Heart right ventricle (tissue), 16 donors: ENCODE measurements at regions of chr13 and their contacts with region 1.

Region 1: DNA sequence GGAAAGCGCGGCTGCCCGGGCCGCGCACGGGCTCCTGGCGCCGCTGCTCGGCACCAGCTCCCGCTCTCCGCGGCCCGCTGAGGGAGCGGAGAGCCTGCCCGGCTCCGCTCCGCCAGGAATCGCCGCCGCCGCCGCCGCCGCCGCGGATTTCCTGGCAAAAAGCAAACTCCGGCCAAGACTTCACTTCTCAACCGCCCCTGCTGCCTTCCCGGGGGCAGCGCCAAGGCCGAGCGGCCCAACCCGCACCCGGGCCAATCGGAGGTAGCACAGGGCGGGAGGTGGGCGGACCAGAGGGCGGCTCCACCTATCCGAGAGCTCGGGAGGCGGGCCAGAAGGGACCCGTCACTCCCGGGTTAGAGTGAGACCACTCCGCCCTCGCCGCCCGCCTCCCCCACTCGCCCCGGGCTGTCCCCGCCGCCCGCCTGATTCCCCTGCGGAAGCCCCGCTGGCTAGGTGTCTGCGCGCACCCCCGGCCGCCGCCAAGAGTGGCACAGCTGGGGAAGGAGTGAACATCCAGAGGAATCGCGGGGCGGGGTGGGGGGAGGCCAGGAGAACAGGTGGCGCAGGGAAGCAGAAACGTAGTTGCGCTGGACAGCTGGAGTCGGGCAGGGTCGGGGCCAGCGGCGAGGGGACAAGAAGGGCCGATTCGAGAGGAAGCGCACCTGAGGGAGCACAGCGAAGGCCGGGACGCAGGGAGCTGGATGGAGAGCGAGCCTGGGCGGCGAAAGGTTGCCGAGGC is at the start of gene LNX2:
- DNase-seq: peak; percentile 98 to 99
- ATAC-seq: peak; percentile 97 to 99 (median 98)
- H3K4me3 ChIP-seq: peak within 1 kb of the TSS; percentile 58 to 100 (median 92)
- H3K27ac ChIP-seq: peak within 1 kb of the TSS; percentile 90 to 99 (median 96)
- H3K4me1 ChIP-seq: peaks cover 4 to 49% (median 31%) of the 10 kb centered on the region in 9 donors
- H3K27me3 ChIP-seq: no peaks in the 10 kb centered on the region
- CTCF ChIP-seq: no peak
- total RNA-seq, gene LNX2: 10.2 to 22.3 (median 15.4) TPM

Region 2: DNA sequence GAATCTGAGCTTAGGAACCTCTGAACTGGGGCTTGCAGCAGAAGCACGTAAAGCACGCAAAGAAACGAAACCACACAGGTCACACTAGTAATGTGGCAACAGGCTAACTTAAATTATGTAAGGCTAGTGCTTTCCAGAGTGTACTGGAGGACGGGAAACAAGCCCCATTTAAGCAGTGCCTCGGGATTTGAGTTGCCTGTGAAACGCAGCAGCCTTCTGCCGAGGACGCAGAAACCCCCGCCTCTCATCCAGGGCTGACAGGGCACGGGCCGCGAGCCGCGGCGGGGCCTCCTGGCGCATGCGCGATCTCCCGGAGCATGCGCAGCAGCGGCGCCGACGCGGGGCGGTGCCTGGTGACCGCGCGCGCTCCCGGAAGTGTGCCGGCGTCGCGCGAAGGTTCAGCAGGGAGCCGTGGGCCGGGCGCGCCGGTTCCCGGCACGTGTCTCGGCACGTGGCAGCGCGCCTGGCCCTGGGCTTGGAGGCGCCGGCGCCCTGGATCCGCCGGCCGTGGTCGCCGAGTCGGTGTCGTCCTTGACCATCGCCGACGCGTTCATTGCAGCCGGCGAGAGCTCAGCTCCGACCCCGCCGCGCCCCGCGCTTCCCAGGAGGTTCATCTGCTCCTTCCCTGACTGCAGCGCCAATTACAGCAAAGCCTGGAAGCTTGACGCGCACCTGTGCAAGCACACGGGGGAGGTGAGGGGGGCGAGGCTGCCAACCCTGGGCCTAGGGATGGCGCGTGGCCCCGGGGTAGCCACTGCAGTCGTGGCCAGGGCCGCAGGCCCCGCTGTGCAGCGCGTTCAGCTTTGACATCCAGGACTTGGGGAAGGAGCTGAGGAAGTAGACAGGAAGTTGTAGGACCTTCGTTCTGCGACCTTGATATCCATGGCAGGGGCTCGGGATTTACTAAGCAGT is 196.0 kb before region 1 on chr13 and contains the start of gene GTF3A:
- intact Hi-C with region 1: loop called in 2 of 10 experiments (anchors 10 kb)
- DNase-seq: peak; percentile 81 to 88
- ATAC-seq: peak; percentile 89 to 96 (median 94)
- H3K4me3 ChIP-seq: peak within 1 kb of the TSS; percentile 75 to 93 (median 83)
- H3K27ac ChIP-seq: peak within 1 kb of the TSS; percentile 57 to 97 (median 93)
- H3K4me1 ChIP-seq: peaks cover 16 to 46% (median 36%) of the 10 kb centered on the region in 9 donors
- H3K27me3 ChIP-seq: no peaks in the 10 kb centered on the region
- CTCF ChIP-seq: no peak
- total RNA-seq, gene GTF3A: 137 to 262 (median 160) TPM

Region 3: GRCh38 chr13:27449936-27450828 is 170.4 kb before region 1 on chr13 and contains the start of gene MTIF3:
- intact Hi-C with region 1: loop called in 6 of 10 experiments (anchors 2 to 10 kb)
- DNase-seq: peak; percentile 91 to 95
- ATAC-seq: peak; percentile 90 to 97 (median 93)
- H3K4me3 ChIP-seq: peak within 1 kb of the TSS; percentile 67 to 94 (median 87)
- H3K27ac ChIP-seq: peak within 1 kb of the TSS; percentile 97 to 100 (median 99)
- H3K4me1 ChIP-seq: peaks cover 0 to 63% (median 51%) of the 10 kb centered on the region in 9 donors
- H3K27me3 ChIP-seq: no peaks in the 10 kb centered on the region
- CTCF ChIP-seq: peak in 2 of 9 donors; percentile 5 to 11
- total RNA-seq, gene MTIF3: 103 to 207 (median 121) TPM

Region 4: DNA sequence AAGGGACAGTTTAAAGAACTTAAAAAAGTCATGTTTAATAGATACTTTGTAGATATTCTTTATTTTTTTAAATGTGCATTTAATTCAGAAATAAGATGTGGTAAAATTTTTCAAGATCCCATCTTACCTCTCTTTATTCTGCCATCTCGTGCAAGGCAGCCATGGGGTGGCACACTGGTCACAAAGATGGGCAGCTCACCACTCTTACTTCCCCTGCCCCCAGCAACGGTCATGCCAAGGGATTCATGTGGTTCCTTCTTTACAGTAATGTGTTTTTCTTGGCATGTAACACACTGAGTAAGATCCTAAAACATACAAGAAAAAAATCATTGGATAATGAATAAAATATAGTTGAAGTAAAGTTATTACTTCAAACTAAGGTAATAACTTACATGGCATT is 64.4 kb before region 1 on chr13:
- intact Hi-C with region 1: loop called in 2 of 10 experiments (anchors 5 to 10 kb)
- DNase-seq: peak in 1 of 2 donors; percentile 12
- ATAC-seq: peak in 1 of 8 donors; percentile 49
- H3K4me3 ChIP-seq: no peak overlapping the region
- H3K27ac ChIP-seq: no peak overlapping the region
- H3K4me1 ChIP-seq: peaks cover 0 to 14% (median 3%) of the 10 kb centered on the region in 9 donors
- H3K27me3 ChIP-seq: no peaks in the 10 kb centered on the region
- CTCF ChIP-seq: peak in 6 of 9 donors; percentile 14 to 45 (median 34)

Region 5: GRCh38 chr13:27569405-27569804 is 51.1 kb before region 1 on chr13:
- intact Hi-C with region 1: loop called in 3 of 10 experiments (anchors 5 to 10 kb)
- DNase-seq: no peak
- ATAC-seq: no peak
- H3K4me3 ChIP-seq: no peak overlapping the region
- H3K27ac ChIP-seq: no peak overlapping the region
- H3K4me1 ChIP-seq: peaks cover 0 to 14% (median 0%) of the 10 kb centered on the region in 9 donors
- H3K27me3 ChIP-seq: no peaks in the 10 kb centered on the region
- CTCF ChIP-seq: no peak

Region 6: GRCh38 chr13:27578121-27579030 is 42.2 kb before region 1 on chr13:
- intact Hi-C with region 1: loop called in 1 of 10 experiments (anchors 5 kb)
- DNase-seq: no peak
- ATAC-seq: peak in 1 of 8 donors; percentile 16
- H3K4me3 ChIP-seq: no peak overlapping the region
- H3K27ac ChIP-seq: no peak overlapping the region
- H3K4me1 ChIP-seq: peaks cover 0 to 22% (median under 1%) of the 10 kb centered on the region in 9 donors
- H3K27me3 ChIP-seq: no peaks in the 10 kb centered on the region
- CTCF ChIP-seq: no peak